ENCODE measurements at regions of chr1 and their contacts with region 1.

Region 1: GRCh38 chr1:89596698-89597097 is 36.2 kb upstream of the LRRC8C start:
- DNase-seq: no peak
- H3K4me3 ChIP-seq: no peak overlapping the region
- H3K27ac ChIP-seq: no peak overlapping the region
- H3K4me1 ChIP-seq: no peaks in the 10 kb centered on the region
- H3K27me3 ChIP-seq: no peaks in the 10 kb centered on the region
- CTCF ChIP-seq: no peak
- POLR2A ChIP-seq: no peak

Region 2: DNA sequence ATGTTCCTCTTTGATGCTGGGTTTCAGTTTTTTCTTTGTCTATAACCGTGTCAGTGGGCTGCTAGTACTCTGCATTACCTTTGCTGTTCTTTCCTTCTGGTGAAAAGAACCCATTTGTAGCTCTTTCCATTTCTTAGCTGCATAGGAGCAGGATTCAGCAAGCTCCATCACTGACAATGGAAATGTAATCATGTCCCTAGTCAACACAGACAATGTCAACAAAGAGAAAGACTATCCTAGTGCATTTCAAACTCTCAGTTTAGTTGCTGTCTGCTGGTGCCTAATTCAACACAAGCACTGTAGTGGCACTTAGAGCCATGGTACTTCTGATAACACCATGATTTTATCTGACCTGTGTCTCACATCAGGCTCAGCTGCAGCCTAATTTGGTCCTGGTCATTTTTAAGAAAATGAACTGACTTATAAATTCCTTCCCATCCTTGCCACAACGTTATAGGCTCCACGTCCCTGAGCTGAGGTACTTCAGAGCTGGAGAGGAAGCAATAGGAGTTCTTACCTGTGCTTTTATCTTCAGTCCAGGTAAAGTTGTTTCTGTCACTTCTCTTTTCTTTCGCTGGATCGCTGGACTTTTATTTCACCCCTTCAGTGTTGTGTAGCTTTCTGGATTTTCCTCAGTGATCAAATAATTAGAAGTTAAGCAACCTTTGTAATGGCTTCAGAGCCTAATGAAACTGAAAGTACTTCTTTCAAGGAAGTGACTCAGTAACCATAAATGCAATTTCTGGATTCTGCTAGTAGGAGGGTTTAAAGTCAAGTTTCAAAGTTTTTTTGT is 574.3 kb before region 1 on chr1 and contains the start of gene GBP3:
- intact Hi-C with region 1: no loop called
- DNase-seq: no peak
- H3K4me3 ChIP-seq: peak within 1 kb of the TSS; percentile 54 to 70 (median 54)
- H3K27ac ChIP-seq: peak within 1 kb of the TSS; percentile 90
- H3K4me1 ChIP-seq: peaks cover 4 to 5% of the 10 kb centered on the region in 2 donors
- H3K27me3 ChIP-seq: no peaks in the 10 kb centered on the region
- CTCF ChIP-seq: no peak
- POLR2A ChIP-seq: no peak
- total RNA-seq, gene GBP3: 10.1 to 44.9 (median 22.9) TPM

Region 3: GRCh38 chr1:89581859-89582258 is 14.8 kb before region 1 on chr1:
- intact Hi-C with region 1: no loop called
- DNase-seq: no peak
- H3K4me3 ChIP-seq: no peak overlapping the region
- H3K27ac ChIP-seq: no peak overlapping the region
- H3K4me1 ChIP-seq: no peaks in the 10 kb centered on the region
- H3K27me3 ChIP-seq: no peaks in the 10 kb centered on the region
- CTCF ChIP-seq: no peak
- POLR2A ChIP-seq: no peak

Region 4: GRCh38 chr1:89649783-89650182 is 53.1 kb after region 1 on chr1:
- intact Hi-C with region 1: loop called (anchors 2 kb)
- DNase-seq: no peak
- H3K4me3 ChIP-seq: no peak overlapping the region
- H3K27ac ChIP-seq: no peak overlapping the region
- H3K4me1 ChIP-seq: no peaks in the 10 kb centered on the region
- H3K27me3 ChIP-seq: no peaks in the 10 kb centered on the region
- CTCF ChIP-seq: no peak
- POLR2A ChIP-seq: no peak

Measured in breast epithelium (tissue), 4 donors.